Activated naive CD8-positive, alpha-beta T cell treated with anti-CD3 and anti-CD28 coated beads, Interleukin-2, amount 10 ng/mL, durations not matched to agents 7 days and 5 days (primary cell): ENCODE measurements at regions of chr14 and their contacts with region 1.

Region 1: DNA sequence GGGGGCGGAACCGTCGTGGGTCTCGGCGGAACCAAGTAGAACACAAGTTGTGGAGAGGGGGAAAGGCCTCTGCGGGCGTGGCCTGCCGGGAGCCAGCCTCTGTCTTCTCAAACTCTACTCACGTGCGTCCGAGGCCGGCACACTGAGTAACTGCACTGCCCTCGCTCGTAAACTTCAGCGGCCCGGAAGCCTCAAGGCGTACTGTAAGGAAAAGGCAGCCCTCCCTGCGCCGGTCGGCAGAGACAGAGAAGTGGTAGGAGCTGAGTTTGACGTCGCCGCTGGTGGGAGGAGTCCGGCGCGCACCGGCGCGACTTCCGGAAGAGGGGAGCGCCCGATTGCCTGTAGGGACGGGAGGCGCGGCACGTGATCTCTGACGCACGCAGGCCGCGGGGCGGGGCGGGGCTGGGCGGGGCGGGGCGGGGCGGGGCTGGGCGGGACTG is at the start of gene FBXO33:
- DNase-seq: peak; percentile 96
- ATAC-seq: peak; percentile 80
- H3K4me3 Mint-ChIP-seq: peak within 1 kb of the TSS; percentile 100
- H3K27ac Mint-ChIP-seq: peak within 1 kb of the TSS; percentile 100
- H3K4me1 Mint-ChIP-seq: peaks cover 29% of the 10 kb centered on the region
- H3K27me3 Mint-ChIP-seq: no peaks in the 10 kb centered on the region
- total RNA-seq, gene FBXO33: 18.7 to 19.0 TPM

Region 2: GRCh38 chr14:39102969-39103957 is 328.9 kb before region 1 on chr14 and contains the start of gene SEC23A:
- POLR2A ChIA-PET with region 1: interaction called, 27 read pairs
- DNase-seq: peak; percentile 84
- ATAC-seq: peak; percentile 96
- H3K4me3 Mint-ChIP-seq: peak within 1 kb of the TSS; percentile 99
- H3K27ac Mint-ChIP-seq: peak within 1 kb of the TSS; percentile 98
- H3K4me1 Mint-ChIP-seq: peaks cover 37% of the 10 kb centered on the region
- H3K27me3 Mint-ChIP-seq: no peaks in the 10 kb centered on the region
- total RNA-seq, gene SEC23A: 66.2 to 66.8 TPM

Region 3: GRCh38 chr14:39114073-39114838 is 317.9 kb before region 1 on chr14 and contains the start of gene GEMIN2:
- POLR2A ChIA-PET with region 1: interaction called, 32 read pairs
- DNase-seq: peak; percentile 92
- ATAC-seq: peak; percentile 100
- H3K4me3 Mint-ChIP-seq: peak within 1 kb of the TSS; percentile 96
- H3K27ac Mint-ChIP-seq: peak within 1 kb of the TSS; percentile 95
- H3K4me1 Mint-ChIP-seq: peaks cover 25% of the 10 kb centered on the region
- H3K27me3 Mint-ChIP-seq: no peaks in the 10 kb centered on the region
- total RNA-seq, gene GEMIN2: 23.1 to 24.9 TPM

Region 4: GRCh38 chr14:39169541-39169900 is 262.7 kb before region 1 on chr14:
- POLR2A ChIA-PET with region 1: interaction called, 34 read pairs
- DNase-seq: no peak
- ATAC-seq: no peak
- H3K4me3 Mint-ChIP-seq: peak overlapping the region; percentile 86
- H3K27ac Mint-ChIP-seq: peak overlapping the region; percentile 88
- H3K4me1 Mint-ChIP-seq: peaks cover 35% of the 10 kb centered on the region
- H3K27me3 Mint-ChIP-seq: no peaks in the 10 kb centered on the region

Region 5: GRCh38 chr14:39174560-39175444 is 257.4 kb before region 1 on chr14 and contains the start of gene PNN:
- POLR2A ChIA-PET with region 1: interaction called, 34 read pairs
- DNase-seq: peak; percentile 91
- ATAC-seq: peak; percentile 92
- H3K4me3 Mint-ChIP-seq: peak within 1 kb of the TSS; percentile 91
- H3K27ac Mint-ChIP-seq: peak within 1 kb of the TSS; percentile 96
- H3K4me1 Mint-ChIP-seq: peaks cover 27% of the 10 kb centered on the region
- H3K27me3 Mint-ChIP-seq: no peaks in the 10 kb centered on the region
- total RNA-seq, gene PNN: 105 TPM

Region 6: DNA sequence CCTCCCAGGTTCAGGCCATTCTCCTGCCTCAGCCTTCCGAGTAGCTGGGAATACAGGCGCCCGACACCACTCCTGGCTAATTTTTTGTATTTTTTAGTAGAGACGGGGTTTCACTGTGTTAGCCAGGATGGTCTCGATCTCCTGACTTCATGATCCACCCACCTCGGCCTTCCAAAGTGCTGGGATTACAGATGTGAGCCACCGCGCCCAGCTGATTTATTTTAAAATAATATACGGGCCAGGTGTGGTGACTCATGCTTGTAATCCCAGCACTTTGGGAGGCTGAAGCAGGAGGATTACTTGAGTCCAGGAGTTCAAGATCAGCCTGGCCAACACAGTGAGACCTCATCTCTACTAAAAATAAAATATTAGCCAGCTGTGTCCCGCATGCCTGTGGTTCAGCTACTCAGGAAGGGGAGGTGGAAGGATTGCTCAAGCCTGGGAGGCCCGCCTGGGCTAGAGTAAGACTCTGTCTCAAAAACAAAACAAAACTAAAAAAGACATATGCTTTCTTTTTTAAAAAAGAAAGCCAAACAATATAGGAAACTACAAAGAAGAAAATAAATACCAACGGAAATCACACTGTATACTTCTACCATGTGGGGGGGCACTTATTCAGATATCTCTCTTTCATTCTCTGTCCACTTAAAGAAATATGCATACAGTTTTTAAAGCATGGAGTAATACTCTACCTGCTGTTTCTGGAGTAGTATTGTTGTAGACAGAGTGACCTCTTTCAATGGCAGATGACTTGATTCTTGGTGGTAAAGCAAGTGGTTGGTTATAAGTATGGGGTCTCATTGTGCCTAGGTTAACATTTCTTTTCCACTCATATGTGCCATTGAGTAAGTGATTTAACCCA is 199.4 kb before region 1 on chr14:
- POLR2A ChIA-PET with region 1: interaction called, 17 read pairs
- DNase-seq: no peak
- ATAC-seq: no peak
- H3K4me3 Mint-ChIP-seq: peak overlapping the region; percentile 8
- H3K27ac Mint-ChIP-seq: peak overlapping the region; percentile 31
- H3K4me1 Mint-ChIP-seq: peaks cover 44% of the 10 kb centered on the region
- H3K27me3 Mint-ChIP-seq: no peaks in the 10 kb centered on the region

Region 7: DNA sequence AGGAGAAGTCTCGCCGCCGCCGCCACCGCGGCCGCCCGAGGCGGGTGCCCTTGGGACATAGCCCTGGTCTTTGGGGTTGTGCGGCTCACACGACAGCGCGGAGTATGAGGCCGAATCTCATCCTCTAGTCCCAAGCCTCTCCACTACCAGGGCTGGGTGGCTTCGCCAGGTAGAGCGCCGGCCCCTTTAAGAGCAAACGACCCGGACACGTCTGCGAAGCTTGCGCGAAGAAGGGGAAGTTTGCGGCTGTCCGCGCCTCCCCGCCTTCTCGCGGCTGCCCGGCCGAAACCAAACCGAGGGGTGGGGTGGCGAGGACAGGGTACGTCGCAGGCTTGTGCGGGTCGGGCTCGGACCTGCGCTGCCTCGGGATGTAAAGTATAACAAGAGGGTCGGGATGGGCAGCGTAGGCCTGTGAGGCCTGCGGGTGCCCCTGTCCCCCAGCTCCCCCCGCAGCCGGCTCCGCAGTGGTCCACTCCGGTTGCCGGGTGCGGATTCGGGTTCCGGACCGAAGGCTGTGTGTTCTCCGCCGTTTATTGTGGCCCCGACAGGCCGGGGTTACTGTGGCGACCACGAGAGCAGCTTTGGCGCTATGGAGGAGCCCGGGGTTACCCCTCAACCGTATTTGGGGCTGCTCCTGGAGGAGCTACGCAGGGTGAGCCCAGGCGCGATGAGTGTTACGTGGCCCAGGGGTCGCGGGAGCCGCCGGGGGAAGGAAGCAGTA is 165.2 kb before region 1 on chr14:
- POLR2A ChIA-PET with region 1: interaction called, 35 read pairs
- DNase-seq: peak; percentile 86
- ATAC-seq: peak; percentile 88
- H3K4me3 Mint-ChIP-seq: peak overlapping the region; percentile 78
- H3K27ac Mint-ChIP-seq: peak overlapping the region; percentile 95
- H3K4me1 Mint-ChIP-seq: peaks cover 36% of the 10 kb centered on the region
- H3K27me3 Mint-ChIP-seq: no peaks in the 10 kb centered on the region

Region 8: GRCh38 chr14:39310051-39310450 is 122.1 kb before region 1 on chr14:
- POLR2A ChIA-PET with region 1: no interaction called
- DNase-seq: no peak
- ATAC-seq: no peak
- H3K4me3 Mint-ChIP-seq: no peak overlapping the region
- H3K27ac Mint-ChIP-seq: no peak overlapping the region
- H3K4me1 Mint-ChIP-seq: peaks cover 1% of the 10 kb centered on the region
- H3K27me3 Mint-ChIP-seq: no peaks in the 10 kb centered on the region